Prostate gland (tissue), 2 donors: ENCODE measurements at regions of chr12 and their contacts with region 1.

Region 1: DNA sequence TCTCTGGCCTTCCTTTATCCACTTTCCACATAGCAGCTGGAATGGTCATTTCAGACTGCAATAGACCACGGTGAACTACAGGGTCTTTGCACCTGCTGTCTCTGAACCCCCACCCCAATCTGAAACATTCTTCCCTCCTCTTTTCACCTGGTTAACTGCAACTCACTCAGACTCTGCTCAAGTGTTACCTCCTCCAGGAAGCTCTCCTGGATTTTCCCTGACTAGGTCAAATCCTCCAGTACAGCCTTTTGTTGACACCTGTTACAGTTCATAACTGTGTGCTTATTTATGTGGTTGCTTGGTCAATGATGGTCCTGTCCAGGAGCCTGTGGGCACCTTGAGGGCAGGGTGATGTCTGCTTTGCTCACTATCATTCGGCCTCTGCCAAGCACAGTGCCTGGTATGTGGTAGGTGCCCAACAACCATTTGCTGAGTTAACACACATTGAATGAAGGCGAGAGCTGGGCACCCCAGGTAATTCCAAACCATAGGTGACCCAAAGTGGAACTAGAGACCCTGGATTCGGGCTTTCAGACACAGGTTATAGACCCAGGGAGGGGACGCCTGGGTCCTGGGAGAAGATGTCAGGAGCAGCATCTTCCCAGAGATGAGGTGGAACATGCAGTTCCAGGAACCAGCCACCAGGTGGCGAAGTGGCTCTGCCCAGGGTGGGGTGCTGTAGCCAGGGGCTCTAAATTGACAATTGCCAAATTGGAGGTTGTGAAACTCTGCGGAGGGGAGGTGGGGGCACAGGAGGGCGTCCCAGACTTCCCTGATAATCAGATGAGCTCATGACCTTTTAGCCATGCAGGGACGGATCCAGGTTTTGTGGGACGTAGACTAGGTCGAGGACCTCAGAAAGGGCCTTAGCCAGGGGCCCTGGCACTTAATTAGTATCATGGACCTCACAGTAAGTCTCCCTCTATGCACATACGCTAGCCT is 28.1 kb downstream of the TRPV4 start:
- DNase-seq: peak; percentile 46
- H3K4me3 ChIP-seq: no peak overlapping the region
- H3K27ac ChIP-seq: no peak overlapping the region
- H3K4me1 ChIP-seq: no peaks in the 10 kb centered on the region
- H3K27me3 ChIP-seq: no peaks in the 10 kb centered on the region
- CTCF ChIP-seq: peak; percentile 94 to 98 (median 96)
- POLR2A ChIP-seq: no peak

Region 2: DNA sequence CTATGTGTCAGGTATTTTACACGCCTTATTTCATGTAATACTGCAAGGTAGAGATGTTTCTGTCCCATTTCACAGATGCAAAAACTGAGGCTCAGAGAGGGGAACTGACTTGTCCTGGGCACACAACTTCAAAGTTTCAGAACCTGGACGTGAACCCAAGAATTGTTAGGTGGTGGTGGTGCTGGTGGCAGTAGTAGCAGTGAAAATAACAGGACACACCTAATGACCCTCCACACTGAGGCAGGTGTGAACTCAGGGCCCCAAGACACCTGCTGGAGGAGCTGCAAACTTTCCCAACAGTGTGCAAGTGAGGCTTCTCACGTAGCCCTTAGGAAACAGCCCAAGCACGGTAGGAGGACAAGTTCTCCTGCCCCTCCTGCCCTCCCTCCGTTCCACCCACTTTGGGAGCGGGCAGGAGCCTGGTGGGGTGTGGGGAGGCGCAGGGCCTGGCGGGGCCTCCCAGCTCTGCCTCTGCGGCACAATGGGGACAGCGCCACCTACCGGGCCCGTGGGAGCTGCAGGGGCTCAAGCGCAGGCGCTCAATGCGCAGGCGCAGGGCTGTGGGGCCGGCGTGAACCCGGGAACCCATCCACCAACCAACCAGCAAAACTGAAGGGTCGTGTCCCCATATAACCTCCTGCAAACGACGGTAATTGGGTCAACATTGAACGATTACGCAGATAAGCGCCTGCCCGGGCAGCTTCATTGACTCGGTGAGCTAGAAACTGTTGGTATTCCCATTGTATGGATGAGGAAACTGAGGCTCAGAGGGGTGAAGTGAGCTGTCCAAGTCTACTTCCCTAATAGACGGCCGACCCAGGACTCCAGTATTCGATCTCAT is 40.1 kb after region 1 on chr12:
- intact Hi-C with region 1: loop called (anchors 2 kb)
- DNase-seq: peak; percentile 80
- H3K4me3 ChIP-seq: no peak overlapping the region
- H3K27ac ChIP-seq: no peak overlapping the region
- H3K4me1 ChIP-seq: no peaks in the 10 kb centered on the region
- H3K27me3 ChIP-seq: no peaks in the 10 kb centered on the region
- CTCF ChIP-seq: peak; percentile 90 to 99 (median 99)
- POLR2A ChIP-seq: peak; percentile 38

Region 3: DNA sequence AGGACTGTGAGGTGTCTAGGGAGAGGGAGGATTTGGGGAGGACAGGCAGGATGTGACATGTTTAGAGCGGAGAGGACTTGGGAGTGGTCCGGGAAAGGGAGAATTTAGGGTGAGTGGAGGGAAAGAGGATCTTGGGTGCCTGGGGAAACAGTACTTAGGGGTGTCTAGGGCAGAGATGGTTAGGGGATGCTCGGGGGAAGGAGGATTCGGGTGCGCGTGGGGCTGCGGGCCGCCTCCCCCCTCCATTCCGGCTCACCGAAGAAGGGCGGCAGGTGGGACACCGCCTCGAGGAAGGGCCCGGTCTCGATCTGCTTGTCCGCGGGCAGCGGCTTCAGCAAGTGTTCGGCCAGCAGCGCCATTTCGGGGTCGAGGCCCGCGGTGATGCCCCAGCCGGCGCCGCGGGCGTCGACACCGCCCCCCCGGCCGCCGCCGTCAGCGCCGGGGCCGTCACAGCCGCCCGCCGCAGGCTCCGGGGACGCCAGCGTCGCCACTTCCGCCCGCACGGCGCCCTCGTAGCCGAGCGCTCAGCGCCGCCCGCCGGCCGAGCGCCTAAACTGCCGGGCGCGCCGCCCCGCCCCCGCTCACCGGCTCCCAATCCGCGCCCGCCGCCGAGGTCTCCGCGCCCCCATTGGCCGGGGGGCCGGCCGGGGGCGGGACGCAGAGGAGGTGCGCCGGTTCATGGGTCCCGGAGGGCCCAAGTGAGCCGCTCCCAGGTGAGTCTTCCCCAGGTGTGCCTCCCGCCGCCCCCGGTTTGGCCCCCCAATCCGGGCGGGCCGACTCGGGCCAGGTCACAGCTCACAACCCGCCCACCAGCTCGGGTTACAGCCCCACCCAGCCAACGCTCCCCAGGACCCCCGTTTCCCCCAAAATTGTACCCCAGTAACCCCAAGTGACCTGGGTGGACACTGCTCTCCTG is 75.2 kb after region 1 on chr12 and contains the start of gene GLTP:
- intact Hi-C with region 1: loop called (anchors 2 kb)
- DNase-seq: peak; percentile 79
- H3K4me3 ChIP-seq: peak within 1 kb of the TSS; percentile 68 to 78
- H3K27ac ChIP-seq: peak within 1 kb of the TSS; percentile 82 to 83
- H3K4me1 ChIP-seq: peaks cover 10% of the 10 kb centered on the region
- H3K27me3 ChIP-seq: no peaks in the 10 kb centered on the region
- CTCF ChIP-seq: peak; percentile 54 to 99 (median 78)
- POLR2A ChIP-seq: peak; percentile 27
- total RNA-seq, gene GLTP: 67.2 to 87.1 TPM